ENCODE measurements at regions of chr22 and their contacts with region 1.

Region 1: GRCh38 chr22:40533712-40534378 is 102.7 kb downstream of the MRTFA start:
- DNase-seq: peak; percentile 81
- ATAC-seq: peak; percentile 89
- H3K4me3 Mint-ChIP-seq: peak overlapping the region; percentile 79
- H3K27ac Mint-ChIP-seq: peak overlapping the region; percentile 91
- H3K4me1 Mint-ChIP-seq: peaks cover 60% of the 10 kb centered on the region
- H3K27me3 Mint-ChIP-seq: no peaks in the 10 kb centered on the region

Region 2: DNA sequence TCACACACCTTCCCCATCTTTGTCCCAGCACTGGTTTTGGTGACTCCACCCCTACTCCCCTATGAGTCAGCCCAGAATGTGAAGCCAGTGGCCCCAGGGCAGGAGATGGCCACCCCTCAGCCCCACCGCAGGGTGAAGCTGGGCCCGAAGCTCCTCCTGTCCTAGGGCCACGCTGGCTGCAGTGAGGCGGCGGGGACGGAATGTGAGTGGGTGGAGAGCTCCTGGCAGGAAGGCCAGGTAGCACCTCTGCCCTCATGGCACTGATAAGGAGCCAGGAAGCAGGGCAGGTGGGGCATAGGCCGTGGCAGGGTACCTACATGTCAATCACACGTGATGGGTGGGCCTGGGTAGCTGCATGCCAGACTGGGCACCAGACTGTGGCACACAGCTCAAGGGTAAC is 123.5 kb before region 1 on chr22:
- CTCF ChIA-PET with region 1: no interaction called
- DNase-seq: no peak
- ATAC-seq: no peak
- H3K4me3 Mint-ChIP-seq: no peak overlapping the region
- H3K27ac Mint-ChIP-seq: no peak overlapping the region
- H3K4me1 Mint-ChIP-seq: peaks cover 3% of the 10 kb centered on the region
- H3K27me3 Mint-ChIP-seq: no peaks in the 10 kb centered on the region

Region 3: GRCh38 chr22:40567106-40567505 is 33.3 kb after region 1 on chr22:
- CTCF ChIA-PET with region 1: no interaction called
- DNase-seq: no peak
- ATAC-seq: no peak
- H3K4me3 Mint-ChIP-seq: no peak overlapping the region
- H3K27ac Mint-ChIP-seq: no peak overlapping the region
- H3K4me1 Mint-ChIP-seq: no peaks in the 10 kb centered on the region
- H3K27me3 Mint-ChIP-seq: no peaks in the 10 kb centered on the region

Region 4: DNA sequence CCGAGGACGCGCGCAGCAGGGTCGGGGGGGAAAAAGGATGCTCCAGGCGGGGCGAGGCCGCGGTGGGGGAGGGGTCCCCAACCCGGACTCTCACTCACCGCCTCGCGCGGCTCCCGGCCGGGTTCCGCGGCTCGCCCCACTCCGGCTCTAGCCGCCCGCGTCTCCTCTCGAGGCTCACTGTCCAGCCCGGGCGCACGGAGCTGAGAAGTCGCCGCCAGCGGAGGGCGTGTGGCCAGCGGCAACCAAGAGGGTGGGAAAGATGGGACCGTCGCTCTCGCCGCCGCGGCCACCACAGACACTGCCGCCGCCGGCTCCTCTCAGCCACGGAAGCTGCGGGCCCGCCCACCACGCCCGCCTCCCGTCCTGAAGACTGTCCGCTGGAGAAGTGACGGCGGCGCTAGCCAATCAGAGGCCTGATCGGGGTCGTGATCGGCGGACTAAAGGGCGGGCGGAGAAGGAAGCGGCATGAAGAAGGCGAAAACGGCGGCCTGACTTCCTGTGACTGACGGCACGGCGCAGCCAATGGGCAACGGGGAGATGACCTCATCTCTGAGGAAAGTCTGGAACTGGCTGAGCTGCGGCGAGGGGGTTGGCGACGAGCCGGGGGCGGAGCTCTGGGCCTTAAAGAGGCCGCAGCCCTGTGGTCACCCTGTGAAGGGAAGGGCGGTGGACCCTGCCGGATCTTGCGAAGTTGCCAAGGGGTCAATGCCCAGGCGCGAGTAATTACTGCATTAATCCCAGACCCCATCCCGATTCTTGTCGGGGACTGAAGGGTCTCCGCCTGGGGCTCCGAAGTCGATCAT is 102.7 kb after region 1 on chr22 and contains the start of gene MRTFA:
- CTCF ChIA-PET with region 1: interaction called, 10 read pairs
- DNase-seq: peak; percentile 100
- ATAC-seq: peak; percentile 96
- H3K4me3 Mint-ChIP-seq: peak within 1 kb of the TSS; percentile 94
- H3K27ac Mint-ChIP-seq: peak within 1 kb of the TSS; percentile 98
- H3K4me1 Mint-ChIP-seq: peaks cover 26% of the 10 kb centered on the region
- H3K27me3 Mint-ChIP-seq: no peaks in the 10 kb centered on the region
- total RNA-seq, gene MRTFA: 59.4 to 74.0 TPM

Region 5: DNA sequence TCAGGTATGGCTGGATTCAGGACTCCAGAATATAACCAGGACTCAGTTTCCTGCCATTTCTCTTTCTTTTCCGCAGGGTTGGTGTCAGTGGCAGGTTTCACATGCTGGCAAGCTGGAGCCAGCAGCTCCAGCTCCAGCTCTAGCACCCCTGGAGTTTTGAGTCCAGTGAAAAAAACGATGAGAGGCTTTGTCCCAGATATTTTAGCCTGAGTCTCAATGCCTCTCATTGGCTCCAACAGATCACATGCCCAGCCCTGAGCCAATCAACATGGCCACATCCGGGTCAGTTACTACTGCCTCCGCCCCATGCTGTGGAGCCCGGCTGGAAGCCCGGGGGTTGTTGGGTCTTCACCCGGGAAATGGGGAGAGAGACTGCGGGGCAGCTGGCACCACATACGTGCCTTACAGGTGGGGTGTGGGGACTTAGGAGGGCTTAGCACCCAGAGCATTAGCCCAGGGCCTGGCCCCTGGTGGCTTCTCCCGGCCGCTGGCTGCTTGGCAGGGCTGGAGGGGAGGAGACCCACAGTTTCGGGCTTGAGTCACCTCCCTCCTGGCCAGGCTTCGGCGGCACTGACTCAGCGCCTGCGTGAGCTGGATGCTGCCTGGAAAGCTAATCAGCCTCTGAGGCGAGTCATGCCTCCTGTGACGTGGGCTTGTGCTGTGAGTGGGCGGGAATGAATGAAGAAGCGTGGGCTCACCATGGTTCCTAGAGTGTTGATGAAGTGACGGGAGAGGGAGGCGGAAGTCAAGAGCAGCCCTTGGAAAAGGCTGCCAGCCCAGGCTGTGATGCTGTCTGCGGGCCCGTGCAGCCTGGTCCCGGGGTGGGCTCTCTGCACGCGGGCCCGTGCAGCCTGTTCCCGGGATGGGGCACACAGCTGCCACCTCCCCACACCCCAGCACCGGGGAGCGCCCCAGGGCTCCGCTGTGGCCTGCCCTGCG is 118.0 kb after region 1 on chr22:
- CTCF ChIA-PET with region 1: interaction called, 82 read pairs
- DNase-seq: peak; percentile 91
- ATAC-seq: peak; percentile 96
- H3K4me3 Mint-ChIP-seq: peak overlapping the region; percentile 59
- H3K27ac Mint-ChIP-seq: peak overlapping the region; percentile 68
- H3K4me1 Mint-ChIP-seq: peaks cover 26% of the 10 kb centered on the region
- H3K27me3 Mint-ChIP-seq: no peaks in the 10 kb centered on the region